ENCODE measurements at regions of chr5 and their contacts with region 1.

Region 1: GRCh38 chr5:17132444-17133083 is 84.9 kb upstream of the BASP1 start:
- DNase-seq: peak in 1 of 2 experiments; percentile 31
- H3K4me3 ChIP-seq: no peak overlapping the region
- H3K4me1 ChIP-seq: peaks cover 7% of the 10 kb centered on the region
- H3K27me3 ChIP-seq: no peaks in the 10 kb centered on the region

Region 2: GRCh38 chr5:16934123-16934522 is 198.4 kb before region 1 on chr5:
- in situ Hi-C with region 1: loop called (anchors 5 kb)
- DNase-seq: peak; percentile 78 to 91
- H3K4me3 ChIP-seq: peak overlapping the region; percentile 87
- H3K4me1 ChIP-seq: peaks cover 34% of the 10 kb centered on the region
- H3K27me3 ChIP-seq: no peaks in the 10 kb centered on the region

Region 3: DNA sequence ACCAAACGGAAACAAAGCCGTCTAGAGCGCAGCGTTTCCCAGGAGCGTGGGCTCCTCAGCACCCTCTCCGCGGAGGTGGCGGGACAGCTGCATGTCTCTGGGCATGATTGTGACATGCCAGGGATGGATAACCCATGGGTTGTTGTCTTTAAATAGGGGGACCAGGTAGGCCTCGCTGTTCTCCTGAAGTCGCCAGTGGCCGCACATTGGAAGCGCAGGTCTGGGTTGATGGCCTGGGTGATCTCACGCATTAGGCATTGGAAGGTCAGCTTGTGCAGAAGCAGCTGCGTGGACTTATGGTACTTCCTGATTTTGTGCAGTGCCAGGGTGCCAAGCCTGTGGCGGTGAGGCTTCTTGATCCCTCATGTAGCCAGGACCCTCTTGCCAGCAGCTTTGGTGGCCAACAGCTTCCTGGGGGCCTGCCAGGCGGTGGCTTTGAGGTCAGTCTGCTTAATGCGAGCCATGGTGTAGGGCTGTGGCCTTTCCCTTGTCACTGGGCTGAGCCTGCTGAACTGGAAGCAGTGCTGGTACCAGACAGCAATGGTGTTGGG is 379.3 kb after region 1 on chr5:
- in situ Hi-C with region 1: no loop called
- DNase-seq: no peak
- H3K4me3 ChIP-seq: no peak overlapping the region
- H3K4me1 ChIP-seq: no peaks in the 10 kb centered on the region
- H3K27me3 ChIP-seq: no peaks in the 10 kb centered on the region

Measured in HAP-1 (cell line).